GM12878 (cell line): ENCODE measurements at regions of chr1 and their contacts with region 1.

Region 1: DNA sequence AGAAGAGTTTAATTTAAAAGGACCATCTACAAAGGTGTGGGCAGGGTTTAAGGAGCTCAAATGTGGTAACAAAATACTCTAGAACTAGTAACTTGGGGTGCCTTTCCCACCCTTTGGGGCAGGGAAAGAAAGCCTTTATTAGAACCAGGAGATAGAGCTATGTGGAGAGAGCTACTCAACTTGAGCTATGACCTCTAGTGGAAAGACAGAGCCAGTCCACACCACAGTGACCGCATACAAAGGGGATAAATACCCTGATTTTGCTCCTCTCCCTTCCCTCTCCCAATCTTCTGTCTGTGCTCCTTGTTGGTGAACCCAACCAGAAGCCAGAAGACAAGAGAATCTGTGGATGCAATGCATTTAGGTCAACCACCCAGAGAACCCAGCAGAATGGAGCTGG is 54.4 kb upstream of the JAK1 start:
- DNase-seq: no peak
- ATAC-seq: peak; percentile 56; the same call in 2 of the 3 replicates
- H3K4me3 ChIP-seq: no peak overlapping the region
- H3K27ac ChIP-seq: no peak overlapping the region
- H3K4me1 ChIP-seq: no peaks in the 10 kb centered on the region
- H3K27me3 ChIP-seq: peaks cover 0 to 3% of the 10 kb centered on the region in 2 experiments; a peak in 2 of 4 replicates
- CTCF ChIP-seq: peak in 2 of 3 experiments; percentile 11 to 15; a peak in 2 of 6 replicates
- EP300 ChIP-seq: no peak
- POLR2A ChIP-seq: no peak
- RAD21 ChIP-seq: 0 out of 2 replicates have a peak, but pooled peaks have one; percentile 31

Region 2: DNA sequence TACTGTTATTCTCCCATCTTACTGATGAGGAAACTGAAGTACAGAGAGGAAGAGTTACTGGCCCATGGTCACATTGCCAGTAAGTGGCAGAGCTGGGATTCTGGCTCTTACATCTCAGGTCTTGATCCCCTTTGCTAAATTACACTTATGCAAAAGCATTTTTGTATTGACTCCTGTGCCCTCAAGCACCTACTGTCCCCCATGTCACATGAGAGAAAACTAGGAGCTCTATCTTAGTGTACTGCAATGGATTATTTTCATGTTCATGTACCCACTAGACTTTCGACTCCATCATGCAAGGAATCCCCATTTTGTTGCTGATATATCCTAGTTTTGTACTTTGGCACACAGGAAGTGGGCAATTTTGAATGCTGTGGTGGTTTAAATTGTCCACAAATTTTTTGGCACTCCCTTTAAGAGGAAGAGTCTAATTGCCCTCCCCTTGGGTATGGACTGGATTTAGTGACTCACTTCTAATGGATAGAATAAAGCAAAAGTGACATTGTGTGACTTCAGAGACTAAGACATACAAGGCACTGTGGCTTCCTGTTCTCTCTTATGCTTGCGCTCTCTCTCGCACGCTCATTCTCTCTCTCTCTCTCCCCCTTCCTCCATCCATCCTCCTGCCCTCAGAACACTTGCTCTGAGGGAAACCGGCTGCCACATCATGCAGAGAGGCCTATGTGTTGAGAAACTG is 10.9 kb before region 1 on chr1:
- CTCF ChIA-PET with region 1: interaction called, 11 read pairs
- POLR2A ChIA-PET with region 1: no interaction called
- RAD21 ChIA-PET with region 1: no interaction called
- SMC1A ChIA-PET with region 1: interaction called, 3 read pairs
- in situ Hi-C with region 1: no loop called
- intact Hi-C with region 1: no loop called
- DNase-seq: no peak
- ATAC-seq: no peak
- H3K4me3 ChIP-seq: no peak overlapping the region
- H3K27ac ChIP-seq: no peak overlapping the region
- H3K4me1 ChIP-seq: no peaks in the 10 kb centered on the region
- H3K27me3 ChIP-seq: peaks cover 0 to 8% of the 10 kb centered on the region in 2 experiments; a peak in 2 of 4 replicates
- CTCF ChIP-seq: no peak
- EP300 ChIP-seq: no peak
- POLR2A ChIP-seq: no peak
- RAD21 ChIP-seq: no peak